ENCODE measurements at regions of chr19 and their contacts with region 1.

Region 1: GRCh38 chr19:3700221-3701032 is at the start of gene PIP5K1C:
- DNase-seq: peak; percentile 97
- ATAC-seq: peak; percentile 95
- H3K4me3 Mint-ChIP-seq: peak within 1 kb of the TSS; percentile 87
- H3K27ac Mint-ChIP-seq: peak within 1 kb of the TSS; percentile 80
- H3K4me1 Mint-ChIP-seq: peaks cover 17% of the 10 kb centered on the region
- H3K27me3 Mint-ChIP-seq: no peaks in the 10 kb centered on the region
- total RNA-seq, gene PIP5K1C: 14.6 to 15.3 TPM

Region 2: GRCh38 chr19:3665681-3666544 is 34.5 kb before region 1 on chr19:
- CTCF ChIA-PET with region 1: interaction called, 11 read pairs
- POLR2A ChIA-PET with region 1: no interaction called
- intact Hi-C with region 1: loop called (anchors 1 to 2 kb)
- DNase-seq: peak; percentile 86
- ATAC-seq: peak; percentile 88
- H3K4me3 Mint-ChIP-seq: no peak overlapping the region
- H3K27ac Mint-ChIP-seq: no peak overlapping the region
- H3K4me1 Mint-ChIP-seq: peaks cover 9% of the 10 kb centered on the region
- H3K27me3 Mint-ChIP-seq: no peaks in the 10 kb centered on the region

Region 3: GRCh38 chr19:3670796-3671679 is 29.4 kb before region 1 on chr19:
- CTCF ChIA-PET with region 1: interaction called, 11 read pairs
- POLR2A ChIA-PET with region 1: interaction called, 3 read pairs
- intact Hi-C with region 1: loop called (anchors 1 to 2 kb)
- DNase-seq: peak; percentile 71
- ATAC-seq: peak; percentile 50
- H3K4me3 Mint-ChIP-seq: peak overlapping the region; percentile 49
- H3K27ac Mint-ChIP-seq: peak overlapping the region; percentile 78
- H3K4me1 Mint-ChIP-seq: peaks cover 23% of the 10 kb centered on the region
- H3K27me3 Mint-ChIP-seq: no peaks in the 10 kb centered on the region

Measured in activated CD4-positive, alpha-beta T cell treated with anti-CD3 and anti-CD28 coated beads for 36 hours (primary cell).